HCT116 (cell line): ENCODE measurements at regions of chr5 and their contacts with region 1.

Region 1: DNA sequence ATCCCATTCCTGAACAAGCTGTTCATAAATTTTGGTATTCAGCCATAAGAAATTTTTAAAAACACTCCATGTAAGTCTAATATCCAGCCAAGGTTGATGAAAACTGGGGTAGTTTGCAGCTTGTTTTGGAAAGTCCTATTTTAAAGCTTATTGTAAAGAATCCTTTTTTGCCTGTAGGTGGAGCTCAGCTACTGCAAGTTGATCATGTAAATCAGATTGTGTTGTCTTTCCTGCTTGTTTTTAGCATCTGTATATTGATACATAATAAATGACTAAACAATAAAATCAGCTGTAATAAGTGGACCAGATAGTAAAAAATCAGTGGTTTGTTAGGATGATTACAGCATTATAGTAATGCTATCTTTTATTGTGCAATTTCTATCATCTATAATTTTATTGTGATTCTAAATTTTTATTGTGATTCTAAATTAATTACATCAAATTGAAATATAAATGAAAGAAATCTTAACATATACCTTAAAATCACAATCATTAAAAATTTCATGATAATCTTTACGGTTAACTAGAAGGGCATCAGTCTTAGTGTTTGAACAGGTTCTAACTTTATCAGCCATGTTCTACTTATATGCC is 42.4 kb downstream of the CWC27 start:
- DNase-seq: peak; percentile 37
- ATAC-seq: 0 out of 2 replicates have a peak, but pooled peaks have one; percentile 47
- H3K4me3 ChIP-seq: no peak overlapping the region
- H3K27ac ChIP-seq: no peak overlapping the region
- H3K4me1 ChIP-seq: no peaks in the 10 kb centered on the region
- H3K27me3 ChIP-seq: no peaks in the 10 kb centered on the region
- CTCF ChIP-seq: peak; percentile 46 to 77 (median 49); a peak in 5 of 6 replicates
- POLR2A ChIP-seq: no peak
- RAD21 ChIP-seq: peak; percentile 70

Region 2: DNA sequence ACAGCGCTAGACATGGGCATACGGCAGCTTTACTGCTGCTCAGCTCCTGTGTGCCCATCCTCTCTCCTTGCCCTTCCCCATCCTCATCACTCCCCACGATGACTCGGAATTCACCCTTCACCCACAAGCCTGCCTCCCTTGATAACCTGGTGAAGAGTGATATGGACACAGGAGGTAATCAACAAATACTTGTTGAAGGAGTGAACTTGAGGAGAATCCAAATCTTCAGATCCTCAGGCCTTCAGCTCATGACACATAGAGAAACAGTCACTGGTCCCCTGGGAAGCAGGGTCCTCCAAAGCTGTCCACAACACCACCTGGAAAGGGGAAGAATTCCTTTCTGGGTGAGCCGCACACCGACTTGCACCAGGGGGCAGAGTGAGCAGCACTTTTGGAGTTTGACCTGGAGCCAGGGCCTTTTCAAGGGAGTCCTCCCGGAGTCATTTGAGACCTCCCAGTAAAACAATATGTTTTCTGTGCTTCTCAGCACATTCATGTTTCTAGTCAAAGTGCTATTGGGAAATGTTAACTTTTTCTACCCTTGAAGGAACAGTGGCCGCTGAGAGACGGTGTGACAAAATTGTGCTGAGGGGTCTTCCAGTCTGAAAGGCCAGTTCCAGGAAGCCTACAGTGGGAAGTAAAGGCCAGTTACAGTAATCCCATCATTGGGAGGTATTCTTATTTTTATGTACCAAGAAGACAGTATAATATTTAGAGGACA is 289.9 kb after region 1 on chr5:
- CTCF ChIA-PET with region 1: interaction called, 3 read pairs
- POLR2A ChIA-PET with region 1: no interaction called
- RAD21 ChIA-PET with region 1: no interaction called
- intact Hi-C with region 1: loop called (anchors 5 kb)
- DNase-seq: peak; percentile 22
- ATAC-seq: peak; percentile 96
- H3K4me3 ChIP-seq: no peak overlapping the region
- H3K27ac ChIP-seq: no peak overlapping the region
- H3K4me1 ChIP-seq: peaks cover 0 to 8% of the 10 kb centered on the region in 2 experiments; a peak in 1 of 4 replicates
- H3K27me3 ChIP-seq: no peaks in the 10 kb centered on the region
- CTCF ChIP-seq: peak; percentile 33 to 72 (median 72); a peak in 5 of 6 replicates
- POLR2A ChIP-seq: no peak
- RAD21 ChIP-seq: peak; percentile 61

Region 3: GRCh38 chr5:65588694-65589093 is 777.5 kb after region 1 on chr5:
- CTCF ChIA-PET with region 1: interaction called, 3 read pairs
- POLR2A ChIA-PET with region 1: no interaction called
- RAD21 ChIA-PET with region 1: no interaction called
- intact Hi-C with region 1: loop called (anchors 10 kb)
- DNase-seq: no peak
- ATAC-seq: no peak
- H3K4me3 ChIP-seq: no peak overlapping the region
- H3K27ac ChIP-seq: no peak overlapping the region
- H3K4me1 ChIP-seq: no peaks in the 10 kb centered on the region
- H3K27me3 ChIP-seq: no peaks in the 10 kb centered on the region
- CTCF ChIP-seq: no peak; a peak in 1 of 6 replicates
- POLR2A ChIP-seq: no peak
- RAD21 ChIP-seq: no peak; the same call in 1 of the 2 replicates